PC-9 (cell line): ENCODE measurements at regions of chr5 and their contacts with region 1.

Region 1: DNA sequence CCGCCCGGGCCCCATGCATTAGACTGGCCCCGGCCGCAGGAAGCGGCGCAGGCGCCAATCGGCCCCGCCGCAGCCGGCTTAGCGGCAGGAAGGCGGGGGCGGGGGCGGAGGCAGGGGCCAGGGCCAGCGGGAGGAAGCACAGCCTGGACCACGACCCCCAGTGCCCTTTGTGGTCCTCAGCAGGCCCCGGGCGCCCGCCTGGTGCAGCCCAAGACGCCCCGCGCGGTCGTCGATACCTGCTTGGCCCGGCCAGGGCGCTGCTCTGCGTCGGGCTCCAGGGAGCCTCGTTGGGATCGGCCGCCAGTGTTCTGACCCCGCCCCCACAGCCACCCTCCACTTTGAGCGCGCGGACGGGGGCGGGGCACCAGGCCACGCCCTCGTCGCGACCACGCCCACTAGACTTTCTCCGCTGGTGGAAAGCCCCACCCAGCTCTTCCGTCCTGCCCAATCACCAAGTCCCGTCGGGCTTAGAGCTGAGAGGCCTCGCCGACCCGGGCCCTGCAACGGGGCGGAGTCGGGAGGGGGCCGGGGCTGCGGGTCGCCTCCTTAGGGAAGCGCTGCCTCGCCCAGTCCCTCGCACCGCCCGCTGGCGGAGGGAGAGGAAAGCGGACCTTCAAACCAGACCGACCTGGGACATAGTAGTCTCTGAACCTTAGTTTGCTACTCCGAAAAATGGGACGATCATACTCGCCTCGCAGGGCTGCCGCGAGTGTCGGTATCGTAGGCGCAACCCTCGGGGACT is at the start of gene PDLIM7:
- DNase-seq: peak; percentile 88 to 99
- H3K4me3 ChIP-seq: peak within 1 kb of the TSS; percentile 85
- H3K27ac ChIP-seq: peak within 1 kb of the TSS; percentile 65
- H3K4me1 ChIP-seq: peaks cover 41% of the 10 kb centered on the region
- H3K27me3 ChIP-seq: no peaks in the 10 kb centered on the region
- CTCF ChIP-seq: no peak
- total RNA-seq, gene PDLIM7: 167 and 202 TPM in 2 replicates

Region 2: DNA sequence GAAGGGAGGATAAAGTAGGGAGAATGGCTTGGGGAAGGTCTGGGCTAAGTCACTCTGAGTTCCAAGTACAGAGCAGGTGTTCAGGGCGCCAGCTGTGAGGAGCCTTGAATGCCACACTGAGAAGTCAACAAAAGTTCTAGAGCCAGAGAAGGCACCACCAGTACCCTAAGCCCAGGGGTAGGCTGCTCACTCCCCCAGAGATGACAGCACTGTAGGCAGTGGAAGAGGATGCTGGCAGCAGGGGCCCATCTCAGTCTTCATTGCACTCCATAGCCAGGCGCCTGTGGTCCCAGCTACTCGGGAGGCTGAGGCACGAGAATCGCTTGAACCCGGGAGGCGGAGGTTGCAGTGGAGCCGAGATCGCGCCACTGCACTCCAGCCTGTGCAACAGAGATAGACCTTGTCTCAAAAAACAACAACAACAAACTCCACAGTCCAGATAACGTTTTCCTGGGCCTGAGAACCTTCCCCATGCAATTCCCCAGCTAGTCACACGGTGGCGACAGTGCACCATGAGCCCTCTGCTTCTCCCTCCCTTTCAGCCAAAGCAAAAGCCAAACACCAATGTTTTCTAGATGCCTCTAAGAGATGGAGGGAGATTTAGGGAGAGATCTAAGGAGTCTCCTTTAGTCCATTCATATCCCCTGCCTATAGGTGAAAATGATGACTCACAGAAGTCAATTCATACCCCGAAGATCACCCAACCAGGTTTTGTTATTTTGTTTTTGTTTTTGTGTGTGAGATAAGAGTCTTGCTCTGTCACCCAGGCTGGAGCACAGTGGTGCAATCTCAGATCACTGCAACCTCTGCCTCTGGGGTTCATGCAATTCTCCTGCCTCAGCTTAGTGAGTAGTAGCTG is 383.7 kb before region 1 on chr5:
- CTCF ChIA-PET with region 1: no interaction called
- POLR2A ChIA-PET with region 1: no interaction called
- intact Hi-C with region 1: loop called (anchors 1 kb)
- DNase-seq: peak; percentile 52 to 81
- H3K4me3 ChIP-seq: no peak overlapping the region
- H3K27ac ChIP-seq: no peak overlapping the region
- H3K4me1 ChIP-seq: no peaks in the 10 kb centered on the region
- H3K27me3 ChIP-seq: no peaks in the 10 kb centered on the region
- CTCF ChIP-seq: peak; percentile 98

Region 3: GRCh38 chr5:177311723-177312648 is 185.5 kb before region 1 on chr5 and contains the start of gene MXD3:
- CTCF ChIA-PET with region 1: interaction called, 4 read pairs
- POLR2A ChIA-PET with region 1: interaction called, 3 read pairs
- intact Hi-C with region 1: loop called (anchors 1 kb)
- DNase-seq: peak; percentile 88 to 98
- H3K4me3 ChIP-seq: peak within 1 kb of the TSS; percentile 72
- H3K27ac ChIP-seq: peak within 1 kb of the TSS; percentile 58
- H3K4me1 ChIP-seq: peaks cover 10% of the 10 kb centered on the region; the same call in 1 of the 2 replicates
- H3K27me3 ChIP-seq: no peaks in the 10 kb centered on the region
- CTCF ChIP-seq: no peak
- total RNA-seq, gene MXD3: 50.0 and 54.8 TPM in 2 replicates

Region 4: GRCh38 chr5:177403792-177404640 is 93.4 kb before region 1 on chr5:
- CTCF ChIA-PET with region 1: interaction called, 9 read pairs
- POLR2A ChIA-PET with region 1: no interaction called
- intact Hi-C with region 1: loop called (anchors 1 kb)
- DNase-seq: peak; percentile 51 to 86
- H3K4me3 ChIP-seq: peak overlapping the region; percentile 78
- H3K27ac ChIP-seq: no peak overlapping the region
- H3K4me1 ChIP-seq: peaks cover 3% of the 10 kb centered on the region; the same call in 1 of the 2 replicates
- H3K27me3 ChIP-seq: no peaks in the 10 kb centered on the region
- CTCF ChIP-seq: peak; percentile 73

Region 5: DNA sequence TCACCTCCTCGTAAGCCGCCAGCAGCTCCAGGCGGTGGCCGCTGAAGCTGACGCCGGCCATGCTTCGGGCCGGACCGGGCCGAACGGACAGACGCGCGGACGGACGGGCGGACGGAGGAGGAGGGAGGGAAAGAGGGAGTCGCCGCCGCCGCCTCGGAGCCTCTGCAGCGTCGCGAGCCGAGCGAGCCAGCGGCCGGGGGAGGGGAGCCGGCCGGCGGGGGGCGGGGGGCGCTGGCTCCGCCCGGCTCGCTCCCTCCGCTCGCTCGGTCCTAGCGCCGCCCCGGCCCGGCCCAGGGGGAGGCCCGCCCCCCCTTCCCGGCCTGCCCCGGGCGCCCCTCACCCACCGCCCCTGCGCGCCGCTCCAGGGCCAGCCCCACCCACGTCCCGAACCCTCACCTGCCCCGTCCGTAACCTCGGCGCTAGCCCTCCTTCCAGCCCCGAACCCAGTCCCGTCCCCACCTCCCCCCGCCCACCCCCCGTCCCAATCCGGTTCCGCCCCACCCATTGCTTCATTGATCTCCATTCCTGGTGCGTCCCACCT is 23.9 kb before region 1 on chr5 and contains the start of gene DBN1:
- CTCF ChIA-PET with region 1: interaction called, 4 read pairs
- POLR2A ChIA-PET with region 1: interaction called, 6 read pairs
- intact Hi-C with region 1: loop called (anchors 2 kb)
- DNase-seq: no peak
- H3K4me3 ChIP-seq: peak within 1 kb of the TSS; percentile 79
- H3K27ac ChIP-seq: no peak within 1 kb of the TSS
- H3K4me1 ChIP-seq: peaks cover 22% of the 10 kb centered on the region
- H3K27me3 ChIP-seq: no peaks in the 10 kb centered on the region
- CTCF ChIP-seq: no peak
- total RNA-seq, gene DBN1: 144 and 181 TPM in 2 replicates